Activated CD4-positive, alpha-beta memory T cell treated with anti-CD3 and anti-CD28 coated beads for 36 hours (primary cell): ENCODE measurements at regions of chr6 and their contacts with region 1.

Region 1: DNA sequence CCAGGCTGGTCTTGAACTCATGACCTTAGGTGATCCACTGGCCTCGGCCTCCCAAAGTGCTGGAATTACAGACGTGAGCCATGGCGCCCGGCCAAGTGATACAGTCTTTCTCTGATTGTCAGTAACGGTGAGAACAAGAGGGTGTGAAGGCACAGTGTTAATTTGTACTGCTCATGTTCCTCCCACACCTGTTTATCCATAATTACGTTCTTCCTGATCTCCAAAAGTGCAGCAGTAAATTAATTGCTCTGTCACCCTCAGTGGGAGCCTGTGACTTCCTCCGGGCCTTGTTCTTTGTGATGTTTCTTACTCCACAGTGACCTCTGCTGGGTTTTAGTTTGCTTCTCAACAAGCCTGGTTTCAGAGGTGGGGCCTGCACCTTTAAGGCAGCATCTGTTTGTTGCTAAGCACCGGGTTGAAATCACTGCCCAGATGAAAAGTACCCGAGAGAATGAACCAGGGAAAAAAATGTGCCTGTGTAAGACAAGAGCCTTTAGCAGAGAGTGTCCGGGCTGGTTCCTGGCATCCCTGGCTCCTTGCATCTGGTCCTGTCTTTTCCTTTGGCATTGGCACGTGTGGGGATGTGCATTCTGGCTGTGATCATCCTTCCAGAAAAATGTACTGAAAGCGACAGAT is 89.1 kb upstream of the CLDN20 start:
- DNase-seq: peak; percentile 73
- H3K4me3 Mint-ChIP-seq: no peak overlapping the region
- H3K27ac Mint-ChIP-seq: peak overlapping the region; percentile 7
- H3K4me1 Mint-ChIP-seq: peaks cover 50% of the 10 kb centered on the region
- H3K27me3 Mint-ChIP-seq: no peaks in the 10 kb centered on the region

Region 2: GRCh38 chr6:154675602-154676088 is 499.0 kb before region 1 on chr6:
- CTCF ChIA-PET with region 1: interaction called, 22 read pairs
- POLR2A ChIA-PET with region 1: no interaction called
- intact Hi-C with region 1: loop called (anchors 1 kb)
- DNase-seq: peak; percentile 93
- H3K4me3 Mint-ChIP-seq: no peak overlapping the region
- H3K27ac Mint-ChIP-seq: no peak overlapping the region
- H3K4me1 Mint-ChIP-seq: no peaks in the 10 kb centered on the region
- H3K27me3 Mint-ChIP-seq: no peaks in the 10 kb centered on the region

Region 3: GRCh38 chr6:154928325-154928922 is 246.3 kb before region 1 on chr6:
- CTCF ChIA-PET with region 1: interaction called, 102 read pairs
- POLR2A ChIA-PET with region 1: no interaction called
- intact Hi-C with region 1: loop called (anchors 1 kb)
- DNase-seq: peak; percentile 77
- H3K4me3 Mint-ChIP-seq: no peak overlapping the region
- H3K27ac Mint-ChIP-seq: no peak overlapping the region
- H3K4me1 Mint-ChIP-seq: peaks cover 9% of the 10 kb centered on the region
- H3K27me3 Mint-ChIP-seq: no peaks in the 10 kb centered on the region

Region 4: GRCh38 chr6:155093430-155093829 is 81.3 kb before region 1 on chr6:
- CTCF ChIA-PET with region 1: no interaction called
- POLR2A ChIA-PET with region 1: no interaction called
- intact Hi-C with region 1: no loop called
- DNase-seq: peak; percentile 58
- H3K4me3 Mint-ChIP-seq: no peak overlapping the region
- H3K27ac Mint-ChIP-seq: no peak overlapping the region
- H3K4me1 Mint-ChIP-seq: peaks cover 10% of the 10 kb centered on the region
- H3K27me3 Mint-ChIP-seq: no peaks in the 10 kb centered on the region

Region 5: DNA sequence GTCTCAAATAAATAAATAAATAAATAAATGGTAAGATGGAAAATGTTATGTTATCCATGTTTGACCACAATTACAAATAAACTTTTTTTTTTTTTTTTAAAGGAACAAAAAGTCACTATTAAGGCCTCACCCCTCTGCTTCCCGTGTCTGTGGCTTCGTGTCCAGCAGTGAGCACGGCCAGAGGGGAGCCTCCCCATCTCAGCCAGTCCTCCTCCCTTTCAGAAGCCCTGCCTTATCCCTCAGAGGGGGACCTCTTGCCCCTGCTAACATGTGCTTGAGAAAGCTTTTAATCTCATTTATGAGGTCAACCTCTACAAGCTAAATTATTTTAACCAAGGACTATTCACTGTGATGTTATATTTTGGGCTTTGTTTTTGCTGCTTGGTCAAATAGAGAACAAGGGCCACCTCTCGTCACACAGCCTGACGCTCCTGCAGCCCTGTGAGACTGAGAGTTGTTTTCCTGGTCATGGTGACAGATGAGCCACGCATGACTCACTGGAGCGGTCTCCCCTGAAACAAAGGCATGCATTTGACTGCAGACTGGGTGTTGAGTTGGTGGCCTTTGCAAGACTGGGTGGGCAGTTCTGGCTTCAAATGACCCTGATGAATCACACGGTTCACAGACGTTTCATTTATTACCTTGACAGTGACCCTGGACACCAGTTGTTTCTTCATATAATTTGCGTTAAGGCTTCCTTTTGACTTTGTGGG is 47.8 kb before region 1 on chr6:
- CTCF ChIA-PET with region 1: interaction called, 3 read pairs
- POLR2A ChIA-PET with region 1: interaction called, 11 read pairs
- intact Hi-C with region 1: loop called (anchors 1 kb)
- DNase-seq: peak; percentile 88
- H3K4me3 Mint-ChIP-seq: peak overlapping the region; percentile 1
- H3K27ac Mint-ChIP-seq: peak overlapping the region; percentile 77
- H3K4me1 Mint-ChIP-seq: peaks cover 38% of the 10 kb centered on the region
- H3K27me3 Mint-ChIP-seq: no peaks in the 10 kb centered on the region

Region 6: DNA sequence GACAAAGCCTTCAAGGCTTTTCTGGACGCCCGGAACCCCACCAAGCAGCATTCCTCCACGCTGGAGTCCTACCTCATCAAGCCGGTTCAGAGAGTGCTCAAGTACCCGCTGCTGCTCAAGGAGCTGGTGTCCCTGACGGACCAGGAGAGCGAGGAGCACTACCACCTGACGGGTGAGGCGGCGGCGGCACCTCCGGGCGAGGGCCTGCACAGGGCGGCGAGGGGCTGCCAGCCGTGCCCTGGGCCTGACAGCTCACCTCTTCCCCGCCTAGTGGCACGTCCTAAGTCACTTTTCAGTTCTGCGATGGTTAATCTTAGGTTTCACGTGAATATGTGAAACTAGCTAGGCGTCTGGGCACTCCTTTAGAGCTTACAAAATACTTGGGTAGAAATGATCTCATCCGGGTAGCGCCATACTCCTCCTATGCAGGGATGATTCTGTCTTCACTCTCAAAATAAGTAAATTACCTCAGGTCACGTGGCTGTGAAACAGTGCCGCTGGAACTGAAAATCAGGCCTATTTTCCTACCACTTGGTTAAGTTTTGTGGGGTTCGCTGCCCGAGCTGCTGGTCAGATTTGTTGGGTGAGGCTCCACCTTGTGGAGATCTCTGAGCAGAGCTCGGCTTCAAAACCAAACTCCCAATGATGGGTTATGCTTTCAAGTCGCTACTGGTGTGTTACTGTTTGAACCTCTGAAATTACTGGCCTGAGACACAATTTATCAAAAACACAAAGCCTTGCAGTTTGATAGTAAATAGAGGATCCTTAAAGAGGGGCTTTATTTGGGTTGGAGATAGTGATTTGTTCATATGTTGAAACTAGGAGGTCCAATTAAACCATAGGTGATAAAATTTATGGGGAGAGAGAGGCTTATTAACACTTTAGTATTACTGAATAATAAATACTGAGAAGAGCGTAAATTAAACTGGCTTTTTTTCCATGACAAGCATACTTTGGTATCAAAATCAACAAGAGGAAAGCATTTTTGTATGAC is 73.6 kb after region 1 on chr6:
- CTCF ChIA-PET with region 1: interaction called, 75 read pairs
- POLR2A ChIA-PET with region 1: no interaction called
- intact Hi-C with region 1: loop called (anchors 1 kb)
- DNase-seq: peak; percentile 50
- H3K4me3 Mint-ChIP-seq: no peak overlapping the region
- H3K27ac Mint-ChIP-seq: no peak overlapping the region
- H3K4me1 Mint-ChIP-seq: no peaks in the 10 kb centered on the region
- H3K27me3 Mint-ChIP-seq: no peaks in the 10 kb centered on the region

Region 7: GRCh38 chr6:155314092-155314772 is 139.5 kb after region 1 on chr6 and contains the start of gene TFB1M:
- CTCF ChIA-PET with region 1: interaction called, 53 read pairs
- POLR2A ChIA-PET with region 1: interaction called, 3 read pairs
- intact Hi-C with region 1: loop called (anchors 1 kb)
- DNase-seq: peak; percentile 99
- H3K4me3 Mint-ChIP-seq: peak within 1 kb of the TSS; percentile 98
- H3K27ac Mint-ChIP-seq: peak within 1 kb of the TSS; percentile 96
- H3K4me1 Mint-ChIP-seq: peaks cover 38% of the 10 kb centered on the region
- H3K27me3 Mint-ChIP-seq: no peaks in the 10 kb centered on the region
- total RNA-seq, gene TFB1M: 45.1 to 48.5 TPM